Right ventricle myocardium inferior (tissue), 1 donor: ENCODE measurements at regions of chr2 and their contacts with region 1.

Region 1: DNA sequence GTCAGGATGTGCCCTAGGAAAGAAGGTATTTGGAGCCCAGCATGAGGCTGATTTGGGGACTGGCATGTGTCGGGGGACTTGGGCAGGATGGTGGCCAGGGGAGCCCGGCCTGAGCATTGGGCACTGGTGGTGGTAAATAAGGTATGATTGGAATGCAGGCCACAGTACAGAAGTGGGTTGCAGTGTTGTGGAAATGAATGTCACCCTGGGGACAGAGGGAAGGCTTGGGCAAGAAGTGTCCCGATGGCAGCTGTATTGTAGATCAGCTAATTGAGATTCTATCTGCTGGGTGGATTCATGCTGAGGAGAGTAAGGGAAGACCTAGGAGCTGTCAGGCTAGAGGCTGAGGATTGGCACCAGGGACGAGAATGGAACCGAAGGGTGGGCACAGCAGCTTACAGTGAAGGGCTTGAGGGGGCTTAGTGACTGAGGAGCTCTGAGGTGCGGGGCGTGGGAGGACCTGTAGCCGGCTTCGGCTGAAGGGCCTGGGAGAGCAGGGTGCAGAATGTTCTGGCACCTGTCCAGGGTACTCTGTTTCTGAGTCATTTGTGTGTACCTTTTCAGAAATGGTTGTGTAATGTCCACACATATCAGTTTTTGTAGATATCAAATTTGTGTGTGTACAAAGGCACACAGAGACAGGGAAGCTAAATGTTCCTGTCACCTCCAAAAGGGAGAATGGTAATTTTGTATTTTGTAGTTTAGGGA is 170.2 kb downstream of the PRKCE start:
- DNase-seq: no peak
- ATAC-seq: peak; percentile 37

Region 2: GRCh38 chr2:45759310-45759851 is 62.3 kb before region 1 on chr2:
- intact Hi-C with region 1: no loop called
- DNase-seq: no peak
- ATAC-seq: peak; percentile 52

Region 3: DNA sequence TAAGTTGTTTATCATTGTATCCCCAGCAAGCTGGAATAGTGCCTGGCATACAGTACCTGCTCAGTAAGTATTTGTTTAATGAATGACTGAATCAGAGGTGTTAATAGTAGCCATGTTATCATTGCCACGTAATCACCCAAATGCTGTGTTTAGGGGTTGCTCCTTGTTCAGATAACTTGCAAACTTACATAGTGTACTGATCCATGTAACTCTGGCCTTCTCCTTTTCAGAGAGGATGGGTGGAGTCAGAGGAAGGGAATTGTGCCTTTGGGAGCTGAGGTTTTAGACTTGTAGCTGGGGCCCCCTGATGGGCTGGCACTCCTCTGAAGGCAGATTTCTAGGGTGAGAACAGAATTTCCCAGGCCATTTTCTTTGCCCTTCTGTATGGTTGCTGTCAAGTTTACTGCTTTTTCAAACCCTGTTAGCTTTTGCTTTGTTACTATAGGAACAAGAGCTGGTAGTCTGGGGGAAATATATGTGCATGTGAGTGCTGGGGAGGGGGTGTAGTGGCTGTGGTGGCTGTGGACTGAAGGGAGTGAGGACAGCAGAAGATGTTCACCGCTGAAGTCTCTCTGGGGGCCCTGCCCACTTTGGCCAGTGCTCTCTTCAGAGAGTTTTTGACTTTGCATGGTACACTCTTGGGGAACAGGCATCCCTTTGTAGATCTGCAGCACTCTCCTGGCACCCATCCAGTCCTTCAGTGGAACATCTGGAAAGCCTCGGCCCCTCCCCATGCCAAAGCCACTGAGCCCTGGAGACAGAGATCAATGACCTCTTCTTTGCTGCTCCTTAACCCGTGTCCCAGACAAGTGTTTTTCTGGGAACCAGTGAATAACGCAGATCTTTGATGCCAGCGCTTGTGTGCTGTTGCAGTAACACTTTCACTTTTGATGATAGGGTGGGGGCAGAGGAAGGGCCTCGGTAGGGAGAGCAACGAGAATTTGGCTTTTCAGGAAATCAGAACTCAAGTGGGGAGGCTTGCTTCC is 38.7 kb after region 1 on chr2:
- intact Hi-C with region 1: loop called (anchors 5 kb)
- DNase-seq: peak; percentile 73
- ATAC-seq: peak; percentile 85

Region 4: GRCh38 chr2:45882707-45883602 is 61.2 kb after region 1 on chr2:
- intact Hi-C with region 1: loop called (anchors 5 kb)
- DNase-seq: no peak
- ATAC-seq: peak; percentile 72

Region 5: GRCh38 chr2:45922571-45922988 is 100.9 kb after region 1 on chr2:
- intact Hi-C with region 1: loop called (anchors 2 kb)
- DNase-seq: peak; percentile 76
- ATAC-seq: peak; percentile 92

Region 6: DNA sequence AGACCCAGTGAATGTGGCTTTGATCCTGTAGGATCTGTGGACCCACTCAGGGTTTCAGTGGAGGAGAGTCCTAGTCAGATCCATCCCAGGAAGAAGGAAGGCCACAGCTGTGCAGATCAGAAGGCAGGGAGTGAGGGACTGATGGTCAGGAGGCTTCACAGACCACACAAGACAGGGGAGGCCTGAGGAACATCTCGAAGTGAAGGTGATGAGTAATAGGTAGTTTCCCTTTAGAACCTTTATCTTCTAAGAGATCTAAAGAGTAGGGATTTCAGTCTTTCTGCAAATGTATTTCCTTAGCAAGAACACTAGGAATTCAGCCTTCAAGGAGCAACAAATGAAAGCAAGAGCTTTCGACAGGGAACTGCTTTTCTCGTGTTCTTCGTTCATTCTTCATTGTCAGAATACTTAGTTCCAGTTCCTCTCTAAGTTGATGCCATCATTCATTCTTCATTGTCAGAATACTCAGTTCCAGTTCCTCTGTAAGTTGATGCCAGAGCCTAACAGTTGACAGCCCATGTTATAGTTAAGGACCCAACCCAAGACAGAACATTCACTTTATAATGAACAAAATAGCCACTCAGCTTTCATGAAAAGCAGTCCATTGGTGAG is 325.3 kb after region 1 on chr2:
- intact Hi-C with region 1: no loop called
- DNase-seq: no peak
- ATAC-seq: no peak